AG04449 (cell line): ENCODE measurements at regions of chr6 and their contacts with region 1.

Region 1: DNA sequence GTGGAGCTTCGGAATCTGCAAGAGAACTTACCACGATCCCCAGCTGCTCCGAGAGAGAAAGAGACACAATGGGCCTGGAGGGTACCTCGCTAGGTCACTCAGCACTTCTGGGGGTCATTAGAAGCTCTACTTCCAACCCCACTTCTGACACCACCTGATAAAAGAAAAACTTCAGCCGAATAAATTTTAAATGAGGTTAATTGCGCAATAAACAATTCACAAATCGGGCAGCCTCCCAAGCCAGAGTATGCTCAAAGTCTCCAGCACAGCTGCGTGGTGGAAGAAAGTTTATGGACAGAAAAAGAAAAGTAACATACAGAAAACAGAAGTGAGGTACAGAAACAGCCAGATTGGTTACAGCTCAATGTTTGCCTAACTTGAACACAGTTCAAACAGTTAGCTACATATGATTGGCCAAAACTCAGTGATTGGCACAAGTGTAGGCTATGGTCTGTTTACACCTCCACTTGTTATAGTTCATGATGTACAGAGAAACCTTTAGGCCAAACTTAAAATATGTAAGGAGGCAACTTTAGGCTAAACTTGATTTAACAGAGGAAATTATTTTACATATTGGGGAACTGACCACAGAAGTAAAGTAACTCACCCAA is 52.6 kb downstream of the COL11A2 start:
- DNase-seq: no peak
- H3K4me3 ChIP-seq: no peak overlapping the region
- CTCF ChIP-seq: no peak

Region 2: GRCh38 chr6:33118525-33119123 is 21.1 kb before region 1 on chr6:
- CTCF ChIA-PET with region 1: interaction called, 68 read pairs
- POLR2A ChIA-PET with region 1: no interaction called
- DNase-seq: no peak
- H3K4me3 ChIP-seq: no peak overlapping the region
- CTCF ChIP-seq: peak; percentile 56

Region 3: GRCh38 chr6:33126101-33126714 is 13.5 kb before region 1 on chr6:
- CTCF ChIA-PET with region 1: interaction called, 68 read pairs
- POLR2A ChIA-PET with region 1: no interaction called
- DNase-seq: no peak
- H3K4me3 ChIP-seq: no peak overlapping the region
- CTCF ChIP-seq: peak; percentile 49